Endothelial cell of umbilical vein (primary cell): ENCODE measurements at regions of chr19 and their contacts with region 1.

Region 1: DNA sequence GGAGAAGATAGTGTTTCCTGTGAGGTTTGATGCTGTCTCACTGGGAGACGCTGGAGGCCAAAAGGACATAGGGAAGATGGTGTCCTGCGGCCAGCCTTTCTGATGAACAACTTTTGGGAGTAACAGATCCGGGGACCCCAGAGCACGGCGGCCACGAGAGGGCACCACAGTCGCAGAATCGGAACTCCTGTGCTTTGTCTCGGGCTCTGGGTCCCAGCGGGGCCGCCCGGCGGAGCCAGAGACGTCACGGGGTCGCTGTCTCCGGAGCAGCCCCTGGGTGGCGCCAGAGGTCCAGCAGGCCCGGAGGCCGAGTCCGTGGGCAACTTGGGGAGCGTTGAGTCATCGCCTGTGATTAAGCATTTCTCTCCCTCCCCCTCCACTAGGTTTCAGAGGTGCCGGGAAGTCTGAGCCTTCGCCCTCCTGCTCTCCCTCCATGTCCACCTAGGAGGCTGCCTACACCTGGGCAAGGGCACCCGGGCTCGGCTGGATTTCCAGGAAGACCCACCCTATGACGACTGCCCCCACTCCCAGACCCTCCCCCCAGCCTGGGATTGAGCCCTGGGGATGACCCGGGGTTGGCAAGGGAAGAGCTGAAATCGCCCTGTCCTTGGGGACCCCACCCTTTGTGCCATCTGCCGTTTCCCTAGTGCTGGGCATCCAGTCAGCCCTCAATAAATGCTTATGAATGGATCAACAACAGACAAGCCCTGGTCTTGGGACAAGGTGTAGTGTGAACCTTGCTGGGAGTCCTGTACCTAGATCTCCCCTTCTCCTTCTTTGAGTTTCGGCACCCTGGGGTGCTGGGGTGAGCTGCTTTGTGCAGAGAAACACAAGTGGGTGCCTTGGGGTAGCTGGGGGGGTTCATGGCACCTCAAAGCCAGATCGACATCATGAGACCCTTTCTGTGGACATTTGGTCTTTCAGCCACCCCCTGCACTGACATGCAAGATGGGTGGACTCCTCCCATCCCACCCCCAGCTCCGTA is 3.4 kb downstream of the NANOS3 start:
- DNase-seq: peak; percentile 96
- H3K4me3 ChIP-seq: peak overlapping the region in 1 of 3 experiments; percentile 4
- H3K27ac ChIP-seq: peak overlapping the region; percentile 78
- H3K4me1 ChIP-seq: peaks cover 5% of the 10 kb centered on the region
- H3K27me3 ChIP-seq: no peaks in the 10 kb centered on the region
- CTCF ChIP-seq: peak; percentile 100
- POLR2A ChIP-seq: no peak

Region 2: DNA sequence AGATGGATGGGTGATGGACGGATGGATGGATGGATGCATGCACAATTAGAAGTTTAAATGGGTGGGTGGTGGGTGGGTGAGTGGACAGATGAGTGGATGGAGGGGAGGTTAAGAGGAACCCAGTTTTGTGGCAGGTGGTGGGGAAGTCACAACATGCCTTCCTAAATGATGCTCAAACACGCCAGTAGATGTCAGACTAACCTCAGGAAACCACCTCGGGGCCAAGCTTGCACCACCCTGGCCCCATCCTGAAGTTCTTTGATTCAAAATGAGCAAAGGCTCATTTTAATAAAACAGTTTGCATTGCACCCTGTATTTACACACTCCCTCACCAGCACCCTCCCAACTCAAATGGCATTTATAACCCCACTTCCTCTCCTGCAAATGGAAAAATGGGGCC is 282.7 kb before region 1 on chr19:
- CTCF ChIA-PET with region 1: interaction called, 3 read pairs
- POLR2A ChIA-PET with region 1: no interaction called
- dilution Hi-C with region 1: no loop called
- intact Hi-C with region 1: loop called (anchors 1 kb)
- DNase-seq: peak; percentile 66
- H3K4me3 ChIP-seq: no peak overlapping the region
- H3K27ac ChIP-seq: no peak overlapping the region
- H3K4me1 ChIP-seq: no peaks in the 10 kb centered on the region
- H3K27me3 ChIP-seq: no peaks in the 10 kb centered on the region
- CTCF ChIP-seq: peak; percentile 39 to 61
- POLR2A ChIP-seq: no peak

Region 3: GRCh38 chr19:13784731-13785452 is 95.5 kb before region 1 on chr19:
- CTCF ChIA-PET with region 1: no interaction called
- POLR2A ChIA-PET with region 1: no interaction called
- dilution Hi-C with region 1: no loop called
- intact Hi-C with region 1: no loop called
- DNase-seq: peak; percentile 62
- H3K4me3 ChIP-seq: no peak overlapping the region
- H3K27ac ChIP-seq: no peak overlapping the region
- H3K4me1 ChIP-seq: peaks cover 27% of the 10 kb centered on the region
- H3K27me3 ChIP-seq: no peaks in the 10 kb centered on the region
- CTCF ChIP-seq: peak; percentile 67 to 85
- POLR2A ChIP-seq: no peak

Region 4: GRCh38 chr19:14048443-14049153 is 168.2 kb after region 1 on chr19:
- CTCF ChIA-PET with region 1: interaction called, 10 read pairs
- POLR2A ChIA-PET with region 1: no interaction called
- dilution Hi-C with region 1: no loop called
- intact Hi-C with region 1: loop called (anchors 1 kb)
- DNase-seq: peak; percentile 35
- H3K4me3 ChIP-seq: no peak overlapping the region
- H3K27ac ChIP-seq: no peak overlapping the region
- H3K4me1 ChIP-seq: no peaks in the 10 kb centered on the region
- H3K27me3 ChIP-seq: no peaks in the 10 kb centered on the region
- CTCF ChIP-seq: peak; percentile 83 to 91
- POLR2A ChIP-seq: no peak